Activated naive CD4-positive, alpha-beta T cell treated with anti-CD3 and anti-CD28 coated beads for 36 hours (primary cell): ENCODE measurements at regions of chr22 and their contacts with region 1.

Region 1: DNA sequence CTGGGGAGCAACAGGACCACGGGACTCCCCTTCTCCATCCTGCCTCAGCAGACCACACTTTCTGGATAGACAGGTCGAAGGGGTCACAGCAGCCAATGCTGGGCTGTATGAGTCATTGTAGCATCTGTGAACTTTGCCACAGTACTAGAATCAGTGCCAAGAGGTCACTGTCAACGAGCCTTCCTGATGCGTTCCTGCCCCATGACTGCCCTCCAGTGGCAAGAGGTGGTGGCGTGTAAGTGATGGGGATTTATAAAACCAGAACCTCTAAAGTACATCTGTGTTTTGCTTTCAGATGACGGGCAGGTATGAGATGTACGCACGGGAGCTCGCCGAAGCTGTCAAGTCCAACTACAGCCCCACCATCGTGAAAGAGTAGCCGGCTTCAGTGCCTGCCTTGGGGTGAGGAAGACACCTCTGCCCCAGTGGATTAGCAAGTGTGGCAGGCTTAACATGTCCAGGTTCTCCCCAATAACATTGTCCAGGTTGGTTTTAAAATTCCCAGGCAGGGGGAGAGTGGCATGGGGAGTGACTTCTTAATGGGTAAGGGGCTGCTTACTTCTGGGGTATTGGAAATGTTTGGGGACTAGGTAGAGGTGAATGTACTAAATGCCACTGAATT is 29.4 kb downstream of the GUCD1 start:
- DNase-seq: peak; percentile 92
- H3K4me3 Mint-ChIP-seq: no peak overlapping the region
- H3K27ac Mint-ChIP-seq: no peak overlapping the region
- H3K4me1 Mint-ChIP-seq: peaks cover 10% of the 10 kb centered on the region
- H3K27me3 Mint-ChIP-seq: no peaks in the 10 kb centered on the region

Region 2: GRCh38 chr22:24189249-24190158 is 336.0 kb before region 1 on chr22:
- CTCF ChIA-PET with region 1: no interaction called
- intact Hi-C with region 1: loop called (anchors 5 kb)
- DNase-seq: peak; percentile 64
- H3K4me3 Mint-ChIP-seq: no peak overlapping the region
- H3K27ac Mint-ChIP-seq: no peak overlapping the region
- H3K4me1 Mint-ChIP-seq: no peaks in the 10 kb centered on the region
- H3K27me3 Mint-ChIP-seq: no peaks in the 10 kb centered on the region

Region 3: GRCh38 chr22:24200616-24201212 is 324.8 kb before region 1 on chr22:
- CTCF ChIA-PET with region 1: no interaction called
- intact Hi-C with region 1: no loop called
- DNase-seq: no peak
- H3K4me3 Mint-ChIP-seq: no peak overlapping the region
- H3K27ac Mint-ChIP-seq: no peak overlapping the region
- H3K4me1 Mint-ChIP-seq: peaks cover 6% of the 10 kb centered on the region
- H3K27me3 Mint-ChIP-seq: no peaks in the 10 kb centered on the region

Region 4: DNA sequence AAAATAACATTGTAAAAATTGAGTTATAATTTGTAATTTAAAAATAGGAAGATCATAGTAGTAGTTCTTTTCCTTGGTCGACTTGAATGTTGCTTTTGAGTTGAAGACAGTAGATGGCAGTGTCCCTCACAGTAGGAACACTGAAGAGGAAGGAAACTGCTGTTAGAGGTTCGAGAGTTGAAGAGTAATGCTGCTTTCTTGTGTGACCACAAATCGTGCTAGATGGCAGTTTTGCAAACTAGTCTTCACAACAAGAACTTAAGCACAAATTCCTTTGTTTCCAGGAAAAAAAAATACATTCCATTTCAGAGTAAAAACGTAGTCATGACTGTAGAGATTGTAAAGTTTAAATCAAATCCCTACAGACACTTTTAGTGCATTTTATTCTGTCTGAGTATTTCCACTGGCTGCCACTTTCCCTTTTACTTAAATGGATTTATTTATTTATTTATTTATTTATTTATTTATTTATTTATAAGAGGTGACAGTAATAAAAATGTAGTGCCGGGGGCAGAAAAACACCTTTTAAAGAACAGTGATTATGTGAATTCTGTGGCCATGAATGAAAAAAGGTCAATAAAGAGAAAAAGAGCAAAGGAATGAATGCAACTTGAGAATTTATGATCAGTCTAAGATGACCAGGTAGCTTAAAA is 200.3 kb before region 1 on chr22:
- CTCF ChIA-PET with region 1: interaction called, 3 read pairs
- intact Hi-C with region 1: loop called (anchors 1 kb)
- DNase-seq: peak; percentile 31
- H3K4me3 Mint-ChIP-seq: no peak overlapping the region
- H3K27ac Mint-ChIP-seq: peak overlapping the region; percentile 35
- H3K4me1 Mint-ChIP-seq: peaks cover 38% of the 10 kb centered on the region
- H3K27me3 Mint-ChIP-seq: no peaks in the 10 kb centered on the region

Region 5: GRCh38 chr22:24536089-24536488 is 10.6 kb after region 1 on chr22:
- CTCF ChIA-PET with region 1: interaction called, 10 read pairs
- intact Hi-C with region 1: no loop called
- DNase-seq: no peak
- H3K4me3 Mint-ChIP-seq: no peak overlapping the region
- H3K27ac Mint-ChIP-seq: no peak overlapping the region
- H3K4me1 Mint-ChIP-seq: no peaks in the 10 kb centered on the region
- H3K27me3 Mint-ChIP-seq: no peaks in the 10 kb centered on the region

Region 6: DNA sequence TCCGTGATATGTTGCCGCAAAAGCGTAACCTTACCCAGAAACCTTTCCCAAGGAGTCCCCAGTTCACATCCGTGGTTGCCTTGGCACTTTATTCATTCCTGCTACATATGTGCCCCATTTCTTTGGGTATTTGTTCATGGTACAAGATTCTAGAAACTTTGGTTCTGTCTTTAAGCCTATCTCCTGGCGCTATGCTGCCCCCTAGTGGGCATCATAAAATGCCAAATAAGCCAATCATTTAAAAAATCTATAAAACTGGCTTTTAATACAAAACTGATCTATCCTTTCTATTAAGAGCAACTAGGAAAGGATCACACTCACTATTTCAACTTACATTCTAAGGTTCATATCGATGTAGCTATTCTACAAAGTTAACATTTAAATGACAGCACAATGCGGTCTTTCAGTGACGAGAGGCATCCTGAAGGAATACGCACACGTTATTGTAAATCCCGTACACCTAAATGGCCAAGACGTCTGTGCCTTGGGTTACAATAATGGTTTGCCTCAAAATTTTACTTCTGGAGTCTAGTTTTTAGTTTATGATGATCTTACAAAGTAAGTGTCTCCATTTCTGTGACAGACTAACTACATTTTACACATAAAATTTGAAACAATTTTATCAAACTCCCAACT is 232.8 kb after region 1 on chr22:
- CTCF ChIA-PET with region 1: no interaction called
- intact Hi-C with region 1: loop called (anchors 5 kb)
- DNase-seq: peak; percentile 75
- H3K4me3 Mint-ChIP-seq: no peak overlapping the region
- H3K27ac Mint-ChIP-seq: no peak overlapping the region
- H3K4me1 Mint-ChIP-seq: no peaks in the 10 kb centered on the region
- H3K27me3 Mint-ChIP-seq: no peaks in the 10 kb centered on the region

Region 7: DNA sequence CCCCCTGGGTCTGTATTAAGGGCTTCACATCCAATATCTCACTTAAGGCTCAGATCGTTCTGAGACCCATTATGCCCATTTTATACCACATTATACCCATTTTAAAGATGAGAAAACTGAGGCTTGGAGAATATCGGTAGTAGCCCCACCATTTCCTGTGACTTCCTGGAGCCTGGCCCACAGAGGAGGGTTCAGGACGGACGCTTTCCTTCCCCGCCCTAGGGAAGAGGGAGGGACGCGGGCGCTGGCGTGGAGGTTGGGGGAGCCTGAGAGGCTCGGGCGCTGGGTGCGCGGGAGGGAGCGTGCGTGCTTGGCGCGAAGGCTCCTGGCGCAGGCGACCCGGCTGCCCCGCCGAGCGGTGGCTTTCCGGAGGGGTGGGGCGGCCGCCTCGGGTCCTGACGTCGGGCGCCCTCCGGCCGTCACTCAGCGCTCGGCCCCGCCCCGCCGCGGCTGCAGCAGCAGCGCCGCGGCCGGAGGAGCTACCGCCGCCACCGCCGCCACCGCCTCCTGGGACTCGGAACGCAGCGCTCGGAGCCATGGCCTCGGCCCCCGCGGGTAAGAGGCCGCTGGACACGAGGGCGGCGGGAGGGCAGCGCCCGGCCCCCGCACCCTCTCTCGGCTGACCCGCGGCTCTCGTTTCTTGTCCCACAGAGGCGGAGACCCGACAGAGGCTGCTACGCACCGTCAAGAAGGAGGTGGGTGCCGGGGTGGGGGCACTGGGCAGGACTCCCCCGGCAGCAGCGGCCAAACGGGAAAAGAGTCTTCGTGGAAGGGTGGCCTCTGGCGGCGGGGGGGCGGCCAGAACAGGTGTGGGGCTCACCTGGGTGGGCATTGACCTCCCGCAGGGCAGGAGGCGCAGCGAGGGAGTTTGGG is 280.5 kb after region 1 on chr22 and contains the start of gene SGSM1:
- CTCF ChIA-PET with region 1: no interaction called
- intact Hi-C with region 1: no loop called
- DNase-seq: peak; percentile 81
- H3K4me3 Mint-ChIP-seq: peak within 1 kb of the TSS; percentile 70
- H3K27ac Mint-ChIP-seq: no peak within 1 kb of the TSS
- H3K4me1 Mint-ChIP-seq: peaks cover 14% of the 10 kb centered on the region
- H3K27me3 Mint-ChIP-seq: no peaks in the 10 kb centered on the region
- total RNA-seq, gene SGSM1: 0.12 to 0.17 TPM